ENCODE measurements at regions of chr15 and their contacts with region 1.

Region 1: GRCh38 chr15:81182756-81183438 is 13.8 kb upstream of the IL16 start:
- DNase-seq: no peak
- ATAC-seq: no peak
- H3K4me3 Mint-ChIP-seq: no peak overlapping the region
- H3K27ac Mint-ChIP-seq: no peak overlapping the region
- H3K4me1 Mint-ChIP-seq: peaks cover 4% of the 10 kb centered on the region
- H3K27me3 Mint-ChIP-seq: peaks cover 30% of the 10 kb centered on the region
- CTCF ChIP-seq: no peak

Region 2: GRCh38 chr15:81071120-81071519 is 111.8 kb before region 1 on chr15:
- CTCF ChIA-PET with region 1: no interaction called
- POLR2A ChIA-PET with region 1: no interaction called
- intact Hi-C with region 1: no loop called
- DNase-seq: no peak
- ATAC-seq: no peak
- H3K4me3 Mint-ChIP-seq: no peak overlapping the region
- H3K27ac Mint-ChIP-seq: no peak overlapping the region
- H3K4me1 Mint-ChIP-seq: peaks cover 11% of the 10 kb centered on the region
- H3K27me3 Mint-ChIP-seq: peaks cover 4% of the 10 kb centered on the region
- CTCF ChIP-seq: no peak

Region 3: GRCh38 chr15:81286621-81287121 is 103.8 kb after region 1 on chr15:
- CTCF ChIA-PET with region 1: no interaction called
- POLR2A ChIA-PET with region 1: no interaction called
- intact Hi-C with region 1: no loop called
- DNase-seq: peak; percentile 41
- ATAC-seq: peak; percentile 89
- H3K4me3 Mint-ChIP-seq: peak overlapping the region; percentile 79
- H3K27ac Mint-ChIP-seq: peak overlapping the region; percentile 97
- H3K4me1 Mint-ChIP-seq: peaks cover 78% of the 10 kb centered on the region
- H3K27me3 Mint-ChIP-seq: no peaks in the 10 kb centered on the region
- CTCF ChIP-seq: no peak

Region 4: GRCh38 chr15:81357223-81357622 is 174.3 kb after region 1 on chr15:
- CTCF ChIA-PET with region 1: no interaction called
- POLR2A ChIA-PET with region 1: no interaction called
- intact Hi-C with region 1: loop called (anchors 5 kb)
- DNase-seq: no peak
- ATAC-seq: no peak
- H3K4me3 Mint-ChIP-seq: no peak overlapping the region
- H3K27ac Mint-ChIP-seq: no peak overlapping the region
- H3K4me1 Mint-ChIP-seq: no peaks in the 10 kb centered on the region
- H3K27me3 Mint-ChIP-seq: no peaks in the 10 kb centered on the region
- CTCF ChIP-seq: no peak